Prostate gland (tissue), 2 donors: ENCODE measurements at regions of chr12 and their contacts with region 1.

Region 1: DNA sequence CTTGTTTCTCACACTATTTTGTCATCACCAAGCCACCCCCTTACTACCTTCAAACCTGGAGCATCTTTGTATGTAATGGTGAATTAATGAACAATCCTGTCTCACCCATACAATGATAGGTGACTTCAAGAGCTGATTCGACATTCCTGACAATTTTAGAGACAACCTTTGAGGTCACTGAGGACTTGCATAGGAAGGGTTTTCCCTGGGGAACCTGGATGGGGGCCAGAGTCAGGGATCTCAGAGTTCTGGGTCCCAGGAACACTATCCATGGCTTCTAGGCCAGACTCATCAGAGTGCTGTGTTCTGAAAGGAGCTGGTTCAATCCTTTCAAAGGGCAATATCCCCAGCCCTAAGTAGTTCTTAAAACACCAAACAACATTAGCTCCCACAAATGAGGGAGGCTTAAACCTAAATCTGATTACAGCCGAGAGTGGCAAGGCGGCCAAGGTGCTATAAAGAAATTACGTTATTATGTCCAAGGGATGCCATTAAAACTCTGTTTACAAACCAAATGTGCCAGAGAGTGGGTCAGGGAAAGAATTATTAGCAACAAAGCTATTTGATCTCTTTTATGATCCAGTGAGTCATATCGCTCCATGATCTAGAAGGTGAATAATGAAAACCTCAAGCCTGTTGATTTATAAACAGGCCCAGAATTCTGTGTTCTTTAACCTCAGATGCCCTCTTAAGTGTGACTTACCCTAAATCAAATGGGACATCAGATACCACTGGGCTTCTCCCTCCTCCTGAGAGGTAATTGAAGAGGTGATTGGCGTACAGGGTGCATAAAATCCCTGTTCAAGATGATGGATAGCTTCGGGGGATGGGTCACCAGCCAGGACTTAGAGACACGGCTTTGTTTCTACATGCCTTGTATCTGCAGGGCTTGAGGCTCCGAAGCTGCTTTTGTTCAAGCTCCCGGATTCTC is 230.2 kb upstream of the TBX3 start:
- DNase-seq: peak; percentile 81
- H3K4me3 ChIP-seq: no peak overlapping the region
- H3K27ac ChIP-seq: peak overlapping the region; percentile 56 to 75
- H3K4me1 ChIP-seq: peaks cover 4% of the 10 kb centered on the region
- H3K27me3 ChIP-seq: no peaks in the 10 kb centered on the region
- CTCF ChIP-seq: no peak
- POLR2A ChIP-seq: no peak

Region 2: DNA sequence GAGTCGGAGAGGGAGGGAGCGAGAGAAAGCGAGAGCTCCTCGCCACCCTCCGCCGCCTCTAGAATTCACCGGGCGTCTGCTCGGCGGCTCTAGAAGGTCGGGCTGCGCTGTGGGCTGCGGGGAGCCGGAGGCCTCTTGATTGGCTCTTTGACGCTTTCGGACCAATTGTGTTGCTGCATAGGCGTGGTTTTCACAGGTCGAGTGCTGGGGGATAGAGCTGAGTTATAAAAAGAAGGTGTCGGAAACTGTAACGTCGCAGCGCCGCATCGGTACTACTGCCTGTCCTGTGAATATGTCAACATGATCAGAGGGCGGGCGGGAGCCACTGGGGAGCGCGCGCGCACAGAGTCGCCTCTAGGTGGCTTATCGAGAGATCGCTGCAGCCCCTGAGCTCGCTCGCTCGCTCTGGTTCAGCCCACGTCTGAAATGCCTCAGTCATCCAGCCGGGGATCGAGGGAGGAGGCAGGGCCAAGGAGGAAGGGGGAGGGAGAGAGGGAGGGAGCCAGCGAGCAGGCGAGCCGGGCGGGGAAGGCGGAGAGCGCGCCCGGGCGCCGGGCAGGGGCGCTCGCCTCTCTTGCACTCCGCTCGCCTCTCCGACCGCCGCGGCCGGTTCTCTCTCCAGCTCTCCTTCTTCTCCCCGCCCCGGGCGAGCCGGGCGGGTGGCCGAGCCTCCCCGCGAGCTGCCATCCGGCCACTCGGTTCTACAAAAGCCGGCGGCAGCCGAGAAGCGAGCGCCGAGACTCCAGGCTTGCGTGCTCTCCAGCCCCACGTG is 229.9 kb before region 1 on chr12 and contains the start of gene TBX3:
- intact Hi-C with region 1: loop called (anchors 5 kb)
- DNase-seq: peak; percentile 99
- H3K4me3 ChIP-seq: peak within 1 kb of the TSS; percentile 89 to 94
- H3K27ac ChIP-seq: peak within 1 kb of the TSS; percentile 88 to 98
- H3K4me1 ChIP-seq: peaks cover 21% of the 10 kb centered on the region
- H3K27me3 ChIP-seq: no peaks in the 10 kb centered on the region
- CTCF ChIP-seq: peak in 3 of 4 experiments; percentile 77 to 99 (median 83)
- POLR2A ChIP-seq: peak; percentile 97
- total RNA-seq, gene TBX3: 155 to 259 TPM

Region 3: DNA sequence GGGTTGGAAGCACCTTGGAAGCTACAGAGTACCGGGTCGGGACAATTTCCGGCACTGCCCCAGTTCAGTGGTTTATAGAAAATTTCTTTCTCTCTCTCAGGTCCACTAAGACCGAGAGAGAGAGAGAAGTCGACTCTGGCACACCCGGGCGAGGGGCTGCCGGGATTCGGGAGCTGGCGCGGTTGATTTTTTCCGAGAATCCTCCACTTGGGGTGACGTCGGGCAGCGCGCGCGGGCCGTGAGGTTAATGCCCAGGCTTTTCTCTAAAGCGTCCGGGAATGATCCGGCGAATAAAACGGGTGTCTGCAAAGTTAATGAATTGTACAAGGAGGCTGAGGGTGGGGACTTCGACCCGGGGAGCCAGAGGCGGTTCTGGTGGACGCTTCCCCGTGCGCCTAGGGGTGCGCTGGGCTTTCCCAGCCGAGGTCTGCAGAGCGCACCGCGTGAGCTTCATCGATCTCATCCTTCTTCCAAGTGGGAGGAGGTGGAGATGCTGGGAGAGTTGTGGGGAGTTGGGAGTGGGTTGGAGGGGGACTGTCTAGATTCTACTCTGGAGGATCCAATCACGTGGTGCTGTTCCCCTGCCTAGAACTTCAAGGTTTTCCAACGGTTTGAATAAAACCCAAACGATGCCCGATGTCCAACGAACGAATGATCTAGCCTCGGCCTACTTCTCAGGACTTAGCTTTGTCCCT is 178.3 kb before region 1 on chr12:
- intact Hi-C with region 1: loop called (anchors 2 kb)
- DNase-seq: no peak
- H3K4me3 ChIP-seq: no peak overlapping the region
- H3K27ac ChIP-seq: peak overlapping the region; percentile 66 to 83
- H3K4me1 ChIP-seq: peaks cover 5% of the 10 kb centered on the region
- H3K27me3 ChIP-seq: no peaks in the 10 kb centered on the region
- CTCF ChIP-seq: no peak
- POLR2A ChIP-seq: no peak

Region 4: DNA sequence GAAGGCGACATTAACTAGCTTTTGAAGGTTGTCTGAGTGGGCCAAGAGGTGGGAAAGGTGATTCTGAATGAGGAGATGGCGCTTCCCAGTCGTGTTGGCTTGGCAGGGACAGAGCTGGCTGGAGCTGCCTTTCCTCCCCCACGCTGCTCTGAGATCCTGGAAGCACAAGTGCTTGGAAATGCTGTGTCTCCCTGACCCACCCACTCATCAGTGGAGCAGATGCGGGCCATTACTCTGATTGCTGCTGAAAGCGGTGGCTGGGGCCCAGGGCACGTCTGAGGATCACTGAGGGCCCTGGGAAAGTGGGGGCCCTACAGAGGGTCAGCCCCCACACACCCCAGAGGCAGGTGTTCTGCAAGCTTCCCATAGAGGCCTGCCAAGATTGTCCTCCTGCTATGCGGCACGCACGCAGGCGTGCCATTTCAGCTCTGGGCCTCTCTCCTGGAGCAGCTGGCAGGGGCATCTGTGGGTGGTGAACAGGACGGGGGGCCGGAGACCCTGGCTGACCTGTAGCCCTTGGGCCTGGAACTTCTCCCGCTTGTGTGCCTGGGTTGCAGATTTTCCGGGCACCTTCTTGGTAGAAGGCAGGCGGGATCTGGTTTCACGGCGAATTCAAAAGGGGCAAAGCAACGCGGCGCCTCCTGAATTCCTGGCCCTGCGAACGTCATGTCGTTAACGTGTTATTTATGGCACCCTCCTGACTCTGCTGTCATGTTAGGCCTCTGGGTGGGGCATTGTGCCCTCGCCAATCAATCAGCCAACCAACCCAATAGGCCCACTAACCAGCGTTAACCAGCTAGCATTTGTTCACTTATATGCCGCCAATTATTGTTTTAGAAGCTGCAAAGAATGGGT is 96.3 kb before region 1 on chr12:
- intact Hi-C with region 1: loop called (anchors 5 kb)
- DNase-seq: no peak
- H3K4me3 ChIP-seq: no peak overlapping the region
- H3K27ac ChIP-seq: no peak overlapping the region
- H3K4me1 ChIP-seq: no peaks in the 10 kb centered on the region
- H3K27me3 ChIP-seq: no peaks in the 10 kb centered on the region
- CTCF ChIP-seq: no peak
- POLR2A ChIP-seq: no peak

Region 5: GRCh38 chr12:114897110-114897509 is 17.0 kb before region 1 on chr12:
- intact Hi-C with region 1: loop called (anchors 1 kb)
- DNase-seq: no peak
- H3K4me3 ChIP-seq: no peak overlapping the region
- H3K27ac ChIP-seq: no peak overlapping the region
- H3K4me1 ChIP-seq: no peaks in the 10 kb centered on the region
- H3K27me3 ChIP-seq: no peaks in the 10 kb centered on the region
- CTCF ChIP-seq: no peak
- POLR2A ChIP-seq: no peak

Region 6: DNA sequence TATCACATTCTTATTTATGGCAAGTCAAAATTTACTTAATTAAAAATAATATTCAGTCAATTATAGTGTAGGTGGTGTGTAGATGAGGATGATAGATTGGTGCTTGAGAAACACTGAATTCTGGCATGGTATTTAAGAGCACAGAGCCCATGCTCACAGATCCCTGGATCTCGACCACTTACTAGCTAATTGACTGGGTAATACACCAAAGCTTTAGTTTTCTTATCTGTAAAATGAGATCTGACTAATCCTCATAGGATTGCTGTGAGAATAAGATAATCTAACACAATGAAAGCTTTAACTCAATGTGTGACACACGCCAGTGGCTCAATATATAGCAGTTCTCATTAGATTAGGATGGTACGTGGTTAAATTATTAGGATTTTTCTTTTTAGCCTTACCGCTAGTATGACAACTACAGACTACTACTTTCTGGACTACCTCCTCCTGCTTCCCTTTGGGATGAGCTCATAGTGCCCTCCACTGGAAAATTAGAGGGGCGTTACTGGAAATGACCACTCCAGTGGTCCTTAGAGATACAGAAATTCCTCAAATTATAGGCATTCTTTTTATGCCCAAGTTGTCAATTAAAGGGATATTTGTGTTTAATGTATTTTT is 252.7 kb after region 1 on chr12:
- intact Hi-C with region 1: loop called (anchors 10 kb)
- DNase-seq: no peak
- H3K4me3 ChIP-seq: no peak overlapping the region
- H3K27ac ChIP-seq: no peak overlapping the region
- H3K4me1 ChIP-seq: no peaks in the 10 kb centered on the region
- H3K27me3 ChIP-seq: no peaks in the 10 kb centered on the region
- CTCF ChIP-seq: peak in 1 of 4 experiments; percentile 6
- POLR2A ChIP-seq: no peak

Region 7: GRCh38 chr12:115752913-115753726 is 839.0 kb after region 1 on chr12:
- intact Hi-C with region 1: loop called (anchors 5 kb)
- DNase-seq: peak; percentile 87
- H3K4me3 ChIP-seq: peak overlapping the region in 1 of 2 donors; percentile 31
- H3K27ac ChIP-seq: peak overlapping the region; percentile 94 to 97
- H3K4me1 ChIP-seq: peaks cover 4% of the 10 kb centered on the region
- H3K27me3 ChIP-seq: no peaks in the 10 kb centered on the region
- CTCF ChIP-seq: peak; percentile 52 to 86 (median 70)
- POLR2A ChIP-seq: no peak